CD8-positive, alpha-beta T cell (primary cell): ENCODE measurements at regions of chr11 and their contacts with region 1.

Region 1: GRCh38 chr11:65497141-65498041 is 1.5 kb upstream of the MALAT1 start:
- DNase-seq: peak; percentile 95 to 99 (median 98)
- ATAC-seq: peak; percentile 80
- H3K4me3 ChIP-seq: peak overlapping the region; percentile 72 to 84
- H3K4me3 Mint-ChIP-seq: no peak overlapping the region
- H3K27ac ChIP-seq: peak overlapping the region; percentile 98 to 99
- H3K27ac Mint-ChIP-seq: no peak overlapping the region
- H3K4me1 ChIP-seq: peaks cover 13% of the 10 kb centered on the region
- H3K4me1 Mint-ChIP-seq: peaks cover 19% of the 10 kb centered on the region
- H3K27me3 ChIP-seq: no peaks in the 10 kb centered on the region
- H3K27me3 Mint-ChIP-seq: no peaks in the 10 kb centered on the region
- CTCF ChIP-seq: no peak

Region 2: DNA sequence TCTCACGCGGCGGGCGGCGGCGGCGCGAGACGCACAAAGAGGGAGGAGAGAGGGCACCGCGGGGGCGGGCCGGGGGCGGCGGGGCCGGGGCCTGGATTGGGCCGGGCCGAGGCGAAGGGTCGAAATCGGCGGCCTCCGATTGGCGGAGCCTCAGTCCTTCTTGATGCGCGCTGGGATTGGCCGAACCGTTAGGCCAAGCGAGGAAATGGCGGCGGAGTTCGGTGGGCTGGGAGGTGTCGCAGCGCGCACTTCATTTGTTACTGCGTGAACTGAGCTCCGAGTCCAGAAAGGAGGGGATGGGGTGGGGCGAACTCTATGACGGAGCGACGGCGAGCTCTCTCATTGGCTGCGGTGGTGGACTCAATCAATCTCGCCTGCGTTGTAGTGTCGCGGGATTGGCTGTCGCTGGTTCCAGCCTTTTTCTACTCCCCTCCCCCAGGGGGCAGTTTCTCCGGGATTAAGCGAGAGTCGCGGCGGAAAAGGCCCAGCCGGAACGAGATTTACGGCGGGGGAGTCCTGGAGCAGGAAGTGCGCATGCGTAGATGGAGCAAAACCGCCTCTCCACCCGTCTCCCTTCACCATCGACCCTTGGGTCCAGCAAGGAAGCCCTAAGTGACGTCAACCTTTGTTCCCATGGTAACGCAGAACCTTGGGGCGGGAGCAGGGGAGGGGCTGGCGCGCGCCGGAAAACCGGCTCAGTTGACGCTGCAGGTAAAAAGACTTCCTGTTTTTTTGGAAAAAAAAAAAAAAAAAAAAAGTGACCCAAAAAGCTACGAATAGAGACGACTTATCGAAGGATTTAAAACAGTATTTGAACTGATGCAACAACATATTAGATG is 718.7 kb before region 1 on chr11 and contains the start of gene SF1:
- CTCF ChIA-PET with region 1: no interaction called
- POLR2A ChIA-PET with region 1: interaction called, 13 read pairs
- intact Hi-C with region 1: no loop called
- DNase-seq: peak; percentile 97 to 100 (median 99)
- ATAC-seq: peak; percentile 82
- H3K4me3 ChIP-seq: peak within 1 kb of the TSS; percentile 70 to 97
- H3K4me3 Mint-ChIP-seq: peak within 1 kb of the TSS; percentile 93
- H3K27ac ChIP-seq: peak within 1 kb of the TSS; percentile 93 to 98
- H3K27ac Mint-ChIP-seq: peak within 1 kb of the TSS; percentile 99
- H3K4me1 ChIP-seq: peaks cover 53% of the 10 kb centered on the region
- H3K4me1 Mint-ChIP-seq: peaks cover 58% of the 10 kb centered on the region
- H3K27me3 ChIP-seq: no peaks in the 10 kb centered on the region
- H3K27me3 Mint-ChIP-seq: no peaks in the 10 kb centered on the region
- CTCF ChIP-seq: no peak
- total RNA-seq, gene SF1: 1,574 to 1,625 TPM

Region 3: DNA sequence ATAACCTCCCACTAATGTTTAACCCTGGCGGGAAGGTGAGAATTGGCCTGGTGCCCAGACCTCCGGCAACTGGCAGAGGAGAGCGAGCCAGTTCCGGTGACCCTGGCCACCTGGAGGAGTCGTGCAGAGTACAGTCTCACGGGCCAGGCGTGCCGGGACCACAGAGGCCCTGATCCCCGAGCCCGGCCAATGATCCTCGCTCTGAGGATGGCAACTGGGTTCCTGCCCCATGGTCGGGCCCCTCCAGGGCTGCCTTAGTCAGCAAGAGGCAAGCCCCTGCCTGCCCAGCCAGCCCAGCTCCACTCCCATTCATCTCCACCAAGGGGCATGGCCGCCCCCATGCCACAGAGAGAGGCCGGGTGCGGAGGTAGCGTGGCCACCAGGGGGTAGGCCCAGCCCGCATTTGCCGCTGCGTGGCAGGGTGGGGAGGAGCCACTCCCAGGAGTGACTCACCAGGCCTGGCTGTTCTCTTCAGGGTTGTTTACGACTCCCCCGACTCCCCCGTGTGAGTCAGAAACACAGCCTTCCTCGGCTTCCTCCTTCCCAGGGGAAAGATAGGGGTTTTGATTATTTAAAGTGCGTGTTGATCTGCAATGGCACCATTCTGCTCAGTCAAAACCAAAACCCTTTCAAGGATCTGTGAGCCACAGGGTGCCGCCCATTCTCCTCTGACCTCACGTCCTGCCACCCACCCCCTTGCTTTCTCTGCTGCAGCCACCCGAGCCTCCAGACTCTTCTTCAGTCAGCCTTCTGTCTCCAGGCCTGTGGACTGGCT is 115.2 kb before region 1 on chr11 and contains the start of gene SLC25A45:
- CTCF ChIA-PET with region 1: interaction called, 5 read pairs
- POLR2A ChIA-PET with region 1: interaction called, 235 read pairs
- intact Hi-C with region 1: loop called in 1 of 2 experiments (anchors 1 kb)
- DNase-seq: peak; percentile 77 to 96 (median 92)
- ATAC-seq: peak; percentile 83
- H3K4me3 ChIP-seq: peak within 1 kb of the TSS; percentile 60 to 98
- H3K4me3 Mint-ChIP-seq: peak within 1 kb of the TSS; percentile 87
- H3K27ac ChIP-seq: peak within 1 kb of the TSS; percentile 97 to 100
- H3K27ac Mint-ChIP-seq: peak within 1 kb of the TSS; percentile 99
- H3K4me1 ChIP-seq: peaks cover 54% of the 10 kb centered on the region
- H3K4me1 Mint-ChIP-seq: peaks cover 42% of the 10 kb centered on the region
- H3K27me3 ChIP-seq: no peaks in the 10 kb centered on the region
- H3K27me3 Mint-ChIP-seq: no peaks in the 10 kb centered on the region
- CTCF ChIP-seq: peak; percentile 81
- total RNA-seq, gene SLC25A45: 27.8 to 29.6 TPM

Region 4: DNA sequence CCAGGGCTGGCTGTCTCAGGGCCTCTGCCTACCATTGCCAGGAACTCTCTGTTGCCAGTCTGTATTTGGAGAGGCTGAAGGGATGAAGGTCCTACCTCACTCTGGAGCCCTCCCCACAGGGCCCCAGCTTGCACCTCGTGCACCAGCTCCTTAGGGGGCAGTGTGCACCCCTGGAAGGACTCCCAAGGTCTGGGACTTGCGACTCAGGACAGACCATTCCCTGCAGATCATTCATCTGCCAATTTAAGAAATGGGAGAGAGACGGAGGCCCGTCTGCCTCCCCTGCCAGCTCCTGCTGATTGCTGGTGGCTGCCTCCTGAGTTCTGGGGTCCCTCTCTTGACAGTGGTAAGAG is 26.0 kb before region 1 on chr11:
- CTCF ChIA-PET with region 1: interaction called, 36 read pairs
- POLR2A ChIA-PET with region 1: interaction called, 506 read pairs
- intact Hi-C with region 1: loop called (anchors 1 kb)
- DNase-seq: peak in 5 of 9 experiments; percentile 20 to 52 (median 36)
- ATAC-seq: peak; percentile 1
- H3K4me3 ChIP-seq: peak overlapping the region; percentile 11 to 42
- H3K4me3 Mint-ChIP-seq: no peak overlapping the region
- H3K27ac ChIP-seq: peak overlapping the region; percentile 60 to 87
- H3K27ac Mint-ChIP-seq: peak overlapping the region; percentile 98
- H3K4me1 ChIP-seq: peaks cover 17% of the 10 kb centered on the region
- H3K4me1 Mint-ChIP-seq: peaks cover 23% of the 10 kb centered on the region
- H3K27me3 ChIP-seq: no peaks in the 10 kb centered on the region
- H3K27me3 Mint-ChIP-seq: no peaks in the 10 kb centered on the region
- CTCF ChIP-seq: no peak

Region 5: GRCh38 chr11:65530157-65530496 is 32.7 kb after region 1 on chr11:
- CTCF ChIA-PET with region 1: interaction called, 4 read pairs
- POLR2A ChIA-PET with region 1: interaction called, 68 read pairs
- intact Hi-C with region 1: loop called in 1 of 2 experiments (anchors 2 kb)
- DNase-seq: peak in 3 of 9 experiments; percentile 48 to 70 (median 61)
- ATAC-seq: peak; percentile 85
- H3K4me3 ChIP-seq: no peak overlapping the region
- H3K4me3 Mint-ChIP-seq: no peak overlapping the region
- H3K27ac ChIP-seq: no peak overlapping the region
- H3K27ac Mint-ChIP-seq: peak overlapping the region; percentile 33
- H3K4me1 ChIP-seq: peaks cover 35% of the 10 kb centered on the region
- H3K4me1 Mint-ChIP-seq: peaks cover 31% of the 10 kb centered on the region
- H3K27me3 ChIP-seq: no peaks in the 10 kb centered on the region
- H3K27me3 Mint-ChIP-seq: no peaks in the 10 kb centered on the region
- CTCF ChIP-seq: peak; percentile 42

Region 6: DNA sequence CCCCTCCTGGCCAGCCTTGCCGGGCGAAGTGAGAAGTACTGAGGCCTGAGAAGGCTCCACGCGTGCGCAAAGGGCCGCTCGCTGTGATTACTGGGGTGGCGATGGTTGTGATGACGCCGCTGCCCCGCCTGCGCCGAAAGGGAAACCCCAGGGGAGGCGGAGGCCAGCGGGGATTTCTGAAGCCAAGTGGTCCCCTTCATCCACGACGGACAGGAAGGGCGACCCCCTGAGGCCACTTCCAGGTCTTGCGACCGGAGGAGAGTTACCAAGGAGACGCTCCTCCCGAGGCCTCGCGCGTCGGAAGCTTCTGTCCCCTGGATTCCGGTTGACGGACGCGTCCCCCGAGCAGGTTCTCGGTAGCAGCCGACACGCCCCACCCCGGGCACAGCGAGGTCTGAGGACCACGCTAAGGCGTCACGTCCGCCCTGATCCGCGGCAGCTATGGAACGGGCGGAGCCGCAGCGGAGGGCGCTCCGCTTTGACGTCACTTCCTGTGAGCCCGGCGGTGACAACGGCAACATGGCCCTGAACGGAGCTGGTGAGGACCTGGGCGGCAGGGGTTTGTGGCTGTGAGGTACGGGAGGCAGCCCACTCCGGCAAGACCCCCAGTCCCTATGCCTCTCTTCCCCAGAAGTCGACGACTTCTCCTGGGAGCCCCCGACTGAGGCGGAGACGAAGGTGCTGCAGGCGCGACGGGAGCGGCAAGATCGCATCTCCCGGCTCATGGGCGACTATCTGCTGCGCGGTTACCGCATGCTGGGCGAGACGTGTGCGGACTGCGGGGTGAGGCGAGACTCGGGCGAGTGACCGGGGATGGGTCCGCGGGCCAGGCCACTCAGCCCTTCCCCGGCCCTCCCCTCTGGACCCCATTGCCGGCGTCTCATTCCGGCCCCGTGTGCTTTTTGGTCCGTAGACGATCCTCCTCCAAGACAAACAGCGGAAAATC is 72.9 kb after region 1 on chr11 and contains the start of gene ZNRD2:
- CTCF ChIA-PET with region 1: interaction called, 4 read pairs
- POLR2A ChIA-PET with region 1: interaction called, 54 read pairs
- intact Hi-C with region 1: no loop called
- DNase-seq: peak; percentile 96 to 99 (median 98)
- ATAC-seq: peak; percentile 69
- H3K4me3 ChIP-seq: peak within 1 kb of the TSS; percentile 92 to 94
- H3K4me3 Mint-ChIP-seq: peak within 1 kb of the TSS; percentile 99
- H3K27ac ChIP-seq: peak within 1 kb of the TSS; percentile 94 to 99
- H3K27ac Mint-ChIP-seq: peak within 1 kb of the TSS; percentile 99
- H3K4me1 ChIP-seq: peaks cover 76% of the 10 kb centered on the region
- H3K4me1 Mint-ChIP-seq: peaks cover 76% of the 10 kb centered on the region
- H3K27me3 ChIP-seq: no peaks in the 10 kb centered on the region
- H3K27me3 Mint-ChIP-seq: no peaks in the 10 kb centered on the region
- CTCF ChIP-seq: no peak
- total RNA-seq, gene ZNRD2: 35.6 to 41.4 TPM